Activated CD4-positive, alpha-beta T cell treated with anti-CD3 and anti-CD28 coated beads, Interleukin-2, amount 10 ng/mL, durations not matched to agents 24 days and 14 days (primary cell): ENCODE measurements at regions of chr5 and their contacts with region 1.

Region 1: GRCh38 chr5:76544268-76544926 is 78.8 kb downstream of the F2RL2 start:
- DNase-seq: peak; percentile 85
- H3K4me3 Mint-ChIP-seq: peak overlapping the region; percentile 87
- H3K27ac Mint-ChIP-seq: peak overlapping the region; percentile 98
- H3K4me1 Mint-ChIP-seq: peaks cover 83% of the 10 kb centered on the region
- H3K27me3 Mint-ChIP-seq: no peaks in the 10 kb centered on the region

Region 2: GRCh38 chr5:75717082-75717922 is 827.1 kb before region 1 on chr5 and contains the start of gene POC5:
- intact Hi-C with region 1: loop called (anchors 5 kb)
- DNase-seq: peak; percentile 99
- H3K4me3 Mint-ChIP-seq: peak within 1 kb of the TSS; percentile 100
- H3K27ac Mint-ChIP-seq: peak within 1 kb of the TSS; percentile 100
- H3K4me1 Mint-ChIP-seq: peaks cover 29% of the 10 kb centered on the region
- H3K27me3 Mint-ChIP-seq: peaks cover 7% of the 10 kb centered on the region
- total RNA-seq, gene POC5: 20.8 and 21.3 TPM in 2 replicates

Region 3: DNA sequence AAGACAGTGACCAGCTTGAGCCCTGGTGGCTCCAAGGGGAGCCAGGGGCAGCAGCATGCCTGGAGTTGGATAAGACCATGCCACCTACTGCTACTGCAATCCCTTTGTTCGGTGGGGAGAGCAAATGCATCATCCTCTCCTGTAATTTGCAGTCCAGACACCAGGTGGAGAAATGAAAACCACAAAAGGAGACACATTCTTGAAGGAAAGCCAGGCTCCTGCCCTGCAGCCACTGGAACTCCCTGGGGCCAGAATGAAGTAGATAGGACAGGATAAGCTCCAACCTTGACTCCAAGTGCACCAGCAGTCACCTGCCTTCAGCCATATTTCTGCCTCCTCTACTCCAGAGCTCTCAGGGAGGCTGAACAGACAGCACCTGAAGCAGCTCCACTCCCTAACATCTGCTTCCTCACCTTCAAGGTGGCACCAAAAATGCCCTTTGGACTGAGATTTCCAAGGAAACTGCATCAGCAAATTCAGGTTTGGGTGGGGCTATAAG is 206.4 kb before region 1 on chr5:
- intact Hi-C with region 1: loop called (anchors 1 kb)
- DNase-seq: peak; percentile 87
- H3K4me3 Mint-ChIP-seq: no peak overlapping the region
- H3K27ac Mint-ChIP-seq: no peak overlapping the region
- H3K4me1 Mint-ChIP-seq: peaks cover 34% of the 10 kb centered on the region
- H3K27me3 Mint-ChIP-seq: no peaks in the 10 kb centered on the region

Region 4: DNA sequence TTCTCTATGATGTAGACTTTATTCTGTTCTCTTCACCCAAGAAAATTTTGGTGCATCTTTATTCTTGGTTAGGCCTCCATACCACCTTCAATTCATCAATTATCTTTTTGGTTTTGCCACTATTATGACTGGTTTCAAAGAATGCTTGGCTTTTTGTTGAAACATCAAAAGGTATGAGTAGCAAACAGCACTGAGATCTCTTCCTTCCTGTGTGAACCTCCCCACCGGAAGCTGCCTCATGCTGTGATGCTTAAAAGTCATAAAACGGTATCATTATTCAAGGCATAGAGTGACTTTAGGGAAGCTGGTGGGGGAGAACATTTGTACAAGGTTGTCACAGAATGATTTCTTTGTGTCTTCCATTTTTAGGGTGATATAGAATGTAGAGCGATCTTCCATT is 70.7 kb before region 1 on chr5:
- intact Hi-C with region 1: loop called (anchors 2 kb)
- DNase-seq: peak; percentile 88
- H3K4me3 Mint-ChIP-seq: peak overlapping the region; percentile 51
- H3K27ac Mint-ChIP-seq: peak overlapping the region; percentile 86
- H3K4me1 Mint-ChIP-seq: peaks cover 50% of the 10 kb centered on the region
- H3K27me3 Mint-ChIP-seq: no peaks in the 10 kb centered on the region

Region 5: DNA sequence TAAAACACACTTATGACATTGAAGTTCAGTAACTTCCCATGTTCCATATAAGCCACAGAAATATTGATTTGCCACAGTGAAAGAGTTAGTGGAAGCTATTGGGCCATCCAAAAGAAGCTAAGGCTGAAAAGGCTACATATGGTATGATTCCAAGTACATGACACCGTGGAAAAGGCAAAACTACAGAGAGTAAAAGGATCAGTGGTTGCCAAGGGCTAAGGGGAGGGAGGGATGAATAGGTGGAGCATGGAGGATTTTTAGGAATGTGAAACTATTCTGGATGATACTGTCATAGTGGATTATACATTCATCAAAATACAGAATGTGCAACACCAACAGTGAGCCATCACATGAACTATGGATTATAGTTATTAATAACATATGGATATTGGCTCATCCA is 30.9 kb before region 1 on chr5:
- intact Hi-C with region 1: no loop called
- DNase-seq: no peak
- H3K4me3 Mint-ChIP-seq: no peak overlapping the region
- H3K27ac Mint-ChIP-seq: no peak overlapping the region
- H3K4me1 Mint-ChIP-seq: peaks cover 2% of the 10 kb centered on the region
- H3K27me3 Mint-ChIP-seq: no peaks in the 10 kb centered on the region

Region 6: GRCh38 chr5:76582230-76583162 is 38.1 kb after region 1 on chr5:
- intact Hi-C with region 1: loop called (anchors 1 kb)
- DNase-seq: no peak
- H3K4me3 Mint-ChIP-seq: no peak overlapping the region
- H3K27ac Mint-ChIP-seq: peak overlapping the region; percentile 62
- H3K4me1 Mint-ChIP-seq: peaks cover 25% of the 10 kb centered on the region
- H3K27me3 Mint-ChIP-seq: no peaks in the 10 kb centered on the region